Right ventricle myocardium inferior (tissue), 1 donor: ENCODE measurements at regions of chr5 and their contacts with region 1.

Region 1: DNA sequence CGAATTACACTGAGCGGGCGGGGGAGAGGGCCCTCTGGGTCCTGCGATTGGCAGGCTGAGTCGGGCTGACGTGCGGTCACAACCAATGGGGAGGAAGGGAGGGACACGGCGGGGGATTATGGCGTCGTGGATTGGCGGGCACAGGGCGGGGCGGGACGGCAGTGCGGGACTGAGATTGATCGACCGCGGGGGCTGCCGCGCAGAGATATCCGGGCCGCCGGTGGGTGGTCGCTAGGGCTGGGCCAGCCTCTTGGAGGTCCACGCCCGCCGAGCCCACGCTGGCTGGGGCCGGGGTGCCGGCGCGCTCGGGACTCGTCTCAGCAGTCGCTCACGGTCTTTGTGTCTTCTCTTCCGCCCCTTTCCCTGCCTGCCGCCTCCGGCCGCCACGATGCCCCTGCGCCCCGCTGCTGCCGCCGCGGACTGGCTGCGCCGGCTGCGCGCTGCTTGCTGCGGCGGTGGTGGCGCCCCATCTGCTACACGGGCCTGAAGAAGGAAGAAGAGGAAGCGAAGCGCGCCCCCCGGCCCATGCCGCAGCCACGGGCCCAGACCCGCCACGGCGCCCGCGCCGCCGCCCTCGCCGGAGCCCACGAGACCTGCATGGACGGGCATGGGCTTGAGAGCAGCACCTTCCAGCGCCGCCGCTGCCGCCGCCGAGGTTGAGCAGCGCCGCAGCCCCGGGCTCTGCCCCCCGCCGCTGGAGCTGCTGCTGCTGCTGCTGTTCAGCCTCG is at the start of gene RGMB:
- DNase-seq: peak; percentile 97
- ATAC-seq: peak; percentile 96
- total RNA-seq, gene RGMB: 15.4 TPM

Region 2: DNA sequence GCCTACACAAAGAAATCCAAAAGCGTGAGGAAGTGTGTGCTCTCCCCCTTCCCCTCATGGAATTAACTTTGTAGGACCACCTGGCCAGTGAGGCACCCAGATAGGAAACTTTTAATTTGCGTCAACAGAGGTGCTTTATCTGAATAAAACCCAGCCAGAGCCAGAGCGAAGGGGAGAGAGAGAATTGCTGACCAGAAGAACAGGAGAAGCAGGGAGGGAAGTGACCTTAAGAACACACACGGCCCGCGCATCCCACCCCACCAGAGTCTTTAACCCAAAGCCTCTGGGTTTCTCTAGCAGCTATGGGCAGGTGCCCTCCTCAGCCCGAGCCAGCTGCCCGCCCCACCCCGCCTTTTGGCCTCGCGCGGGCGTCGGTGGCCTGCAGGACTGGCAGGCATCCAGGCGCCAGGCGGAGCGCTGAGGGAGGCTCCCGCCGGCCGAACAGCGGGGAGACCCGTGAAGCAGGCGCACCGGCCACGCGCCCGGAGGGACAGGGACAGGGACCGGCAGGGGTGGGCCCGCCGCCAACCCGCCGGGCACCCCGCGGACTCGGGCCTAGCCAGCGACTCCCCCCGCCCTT is 1966.5 kb before region 1 on chr5:
- intact Hi-C with region 1: loop called (anchors 5 kb)
- DNase-seq: peak; percentile 90
- ATAC-seq: peak; percentile 77

Region 3: DNA sequence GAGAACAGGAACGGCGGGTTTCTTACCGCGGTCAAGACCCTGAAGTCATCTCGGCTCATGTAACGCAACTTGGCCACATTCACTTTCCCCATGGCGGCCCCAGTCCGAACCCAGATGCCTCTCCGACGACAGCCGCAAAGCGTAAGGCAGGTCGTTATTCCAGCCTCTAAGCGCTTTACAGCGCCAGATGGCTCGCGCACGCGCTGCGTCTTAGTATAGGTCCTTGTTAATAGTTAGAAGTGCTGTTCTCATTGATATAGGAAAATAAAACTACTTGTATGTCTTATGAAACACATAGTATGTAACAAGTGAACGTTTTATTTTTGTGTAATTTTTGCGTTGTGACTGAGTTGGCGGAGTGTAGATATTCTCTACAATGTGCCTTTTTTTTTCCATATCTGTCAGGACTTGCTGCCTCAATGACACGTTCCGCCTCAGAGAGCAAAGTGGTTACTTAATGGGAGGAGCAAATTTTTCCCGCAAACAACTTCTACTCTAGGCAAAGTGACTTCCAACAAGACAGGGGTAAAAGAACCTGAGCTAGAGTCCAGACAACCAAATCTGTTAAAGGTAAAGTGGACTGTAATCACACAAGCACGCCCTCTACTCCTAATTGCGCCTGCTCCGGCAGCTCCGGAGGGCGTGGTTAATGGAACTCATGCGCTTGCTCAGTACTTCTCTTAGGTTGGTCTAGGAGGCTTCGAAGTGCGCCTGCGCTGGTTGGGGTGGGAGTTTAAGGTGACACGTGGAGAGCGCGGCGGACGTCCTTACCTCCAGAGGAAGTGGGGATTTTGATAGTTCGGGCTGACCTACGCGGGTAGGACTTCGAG is 1590.3 kb before region 1 on chr5 and contains the start of gene RIOK2:
- intact Hi-C with region 1: loop called (anchors 5 kb)
- DNase-seq: peak; percentile 98
- ATAC-seq: peak; percentile 97
- total RNA-seq, gene RIOK2: 18.3 TPM

Region 4: GRCh38 chr5:98656125-98656792 is 117.4 kb before region 1 on chr5:
- intact Hi-C with region 1: no loop called
- DNase-seq: no peak
- ATAC-seq: no peak

Region 5: GRCh38 chr5:98928873-98929696 is 155.5 kb after region 1 on chr5 and contains the start of gene CHD1:
- intact Hi-C with region 1: loop called (anchors 5 kb)
- DNase-seq: peak; percentile 98
- ATAC-seq: peak; percentile 94
- total RNA-seq, gene CHD1: 11.7 TPM

Region 6: GRCh38 chr5:99032234-99033013 is 258.8 kb after region 1 on chr5:
- intact Hi-C with region 1: loop called (anchors 10 kb)
- DNase-seq: no peak
- ATAC-seq: peak; percentile 82